A673 (cell line): ENCODE measurements at regions of chr5 and their contacts with region 1.

Region 1: GRCh38 chr5:138878437-138879235 is 3.5 kb upstream of the LRRTM2 start:
- DNase-seq: no peak
- H3K4me3 ChIP-seq: no peak overlapping the region
- H3K27ac ChIP-seq: no peak overlapping the region
- H3K4me1 ChIP-seq: peaks cover 36% of the 10 kb centered on the region
- H3K27me3 ChIP-seq: no peaks in the 10 kb centered on the region
- CTCF ChIP-seq: no peak

Region 2: DNA sequence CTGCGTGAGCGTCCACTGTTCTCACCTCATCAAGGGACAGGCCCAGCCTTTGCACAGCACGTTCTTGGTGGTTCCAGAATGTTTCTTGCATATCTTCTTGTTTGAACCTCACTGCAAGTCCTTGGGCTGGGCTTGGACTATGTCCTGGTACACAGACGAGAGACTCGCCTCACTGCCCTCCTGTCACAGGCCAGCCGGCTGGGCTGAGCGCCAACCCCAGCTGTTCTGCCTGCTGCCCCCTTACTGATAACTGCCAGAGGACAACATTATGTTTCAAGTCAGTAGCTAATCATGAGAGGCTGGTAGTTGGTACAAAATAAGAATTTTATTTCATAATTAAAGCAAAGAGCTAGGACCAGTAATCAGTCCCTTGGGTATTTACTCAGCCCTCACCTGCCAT is 49.3 kb after region 1 on chr5:
- CTCF ChIA-PET with region 1: no interaction called
- POLR2A ChIA-PET with region 1: interaction called, 12 read pairs
- intact Hi-C with region 1: no loop called
- DNase-seq: no peak
- H3K4me3 ChIP-seq: no peak overlapping the region
- H3K27ac ChIP-seq: no peak overlapping the region
- H3K4me1 ChIP-seq: no peaks in the 10 kb centered on the region
- H3K27me3 ChIP-seq: no peaks in the 10 kb centered on the region
- CTCF ChIP-seq: no peak

Region 3: DNA sequence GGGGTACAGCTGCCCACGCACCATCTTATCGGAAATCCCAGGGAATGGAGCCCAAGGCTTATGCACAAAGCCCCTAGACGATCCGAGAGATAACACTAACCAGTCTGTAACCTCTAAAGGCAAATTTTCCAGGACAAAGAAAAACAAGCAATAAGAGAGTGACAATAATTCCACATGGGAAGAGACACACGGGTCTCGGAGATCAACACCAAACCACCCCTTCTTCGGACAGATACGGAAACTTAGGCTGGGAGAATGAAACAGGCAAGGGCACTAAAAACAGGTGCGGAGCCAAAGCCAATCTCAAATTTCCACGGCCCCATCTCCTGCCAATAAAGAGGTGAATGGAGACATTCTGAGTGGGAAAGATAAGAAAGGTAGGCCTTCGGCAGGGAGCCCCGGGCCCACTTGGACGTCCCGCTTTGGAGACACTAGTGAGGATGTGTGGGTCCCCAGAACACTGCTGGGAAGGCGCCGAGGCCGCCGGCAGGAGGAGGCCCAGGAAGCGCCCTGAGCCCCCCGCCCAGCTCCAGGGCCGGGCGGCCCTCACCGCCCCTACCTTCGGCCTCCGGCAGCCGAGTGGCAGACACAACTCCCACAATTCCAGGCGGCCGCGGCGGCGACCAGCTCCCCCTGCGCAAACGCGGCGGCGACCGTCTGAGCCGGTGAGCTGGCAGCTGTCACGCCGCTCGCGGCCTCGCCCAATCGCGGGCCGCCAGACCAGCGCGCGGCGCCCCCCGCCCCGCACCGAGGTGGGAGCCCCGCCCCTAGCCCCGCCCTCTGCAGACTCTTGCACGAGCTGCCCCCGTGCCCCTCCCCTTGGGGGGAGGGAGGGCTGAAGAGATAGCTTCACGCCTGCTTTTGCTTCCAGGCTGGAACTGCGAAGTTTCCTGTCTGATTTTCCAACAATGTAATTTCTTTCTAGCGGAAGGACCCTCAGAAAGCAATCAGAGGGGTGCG is 319.4 kb after region 1 on chr5 and contains the start of gene SIL1:
- CTCF ChIA-PET with region 1: no interaction called
- POLR2A ChIA-PET with region 1: interaction called, 15 read pairs
- intact Hi-C with region 1: no loop called
- DNase-seq: peak; percentile 98
- H3K4me3 ChIP-seq: peak within 1 kb of the TSS; percentile 71
- H3K27ac ChIP-seq: peak within 1 kb of the TSS; percentile 90
- H3K4me1 ChIP-seq: no peaks in the 10 kb centered on the region
- H3K27me3 ChIP-seq: no peaks in the 10 kb centered on the region
- CTCF ChIP-seq: no peak
- total RNA-seq, gene SIL1: 18.7 and 22.0 TPM in 2 replicates